Breast epithelium (tissue), 4 donors: ENCODE measurements at regions of chr5 and their contacts with region 1.

Region 1: DNA sequence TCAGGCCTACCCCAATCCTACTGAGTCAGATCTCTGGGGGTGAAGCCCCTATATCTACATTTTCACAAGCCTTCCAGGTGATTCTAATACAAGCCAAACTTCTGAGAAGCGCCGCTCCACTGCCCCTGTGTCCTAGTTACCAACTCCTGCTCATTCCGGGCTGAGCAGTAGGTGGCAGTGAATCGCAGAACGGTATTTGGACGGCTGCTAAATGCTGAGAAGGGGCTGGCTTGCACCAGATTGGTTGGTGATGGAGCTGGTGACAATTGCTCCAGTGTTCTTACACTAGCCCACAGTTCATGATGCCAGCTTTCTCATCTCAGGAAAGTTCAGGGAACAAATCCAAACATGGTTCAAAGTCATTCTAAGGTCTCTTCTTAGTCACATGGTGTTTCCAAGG is 31.1 kb upstream of the FGF1 start:
- DNase-seq: peak; percentile 55 to 80
- H3K4me3 ChIP-seq: no peak overlapping the region
- H3K27ac ChIP-seq: peak overlapping the region; percentile 63 to 87
- H3K4me1 ChIP-seq: peaks cover 0 to 8% of the 10 kb centered on the region in 2 donors
- H3K27me3 ChIP-seq: no peaks in the 10 kb centered on the region
- CTCF ChIP-seq: peak in 2 of 3 donors; percentile 23 to 47
- POLR2A ChIP-seq: no peak

Region 2: DNA sequence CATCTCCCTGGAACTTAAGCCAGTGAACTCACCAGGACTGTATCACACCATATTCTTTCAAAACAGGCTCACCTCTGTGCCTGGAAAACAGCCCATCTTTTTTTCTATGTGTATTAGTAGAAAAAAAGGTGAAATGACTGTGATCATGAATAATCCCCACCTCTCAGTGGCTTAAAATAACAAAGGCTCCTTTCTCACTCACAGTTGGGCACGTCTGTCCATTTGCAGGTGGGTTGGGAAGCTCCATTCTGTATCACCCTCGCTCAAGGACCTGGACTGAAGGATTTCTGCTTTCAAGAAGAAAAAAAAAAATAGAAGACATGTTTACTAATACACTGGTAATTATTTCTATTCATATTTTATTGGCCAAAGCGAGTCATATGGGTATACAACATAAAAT is 13.8 kb before region 1 on chr5:
- intact Hi-C with region 1: loop called (anchors 1 kb)
- DNase-seq: no peak
- H3K4me3 ChIP-seq: no peak overlapping the region
- H3K27ac ChIP-seq: no peak overlapping the region
- H3K4me1 ChIP-seq: peaks cover 0 to 7% of the 10 kb centered on the region in 2 donors
- H3K27me3 ChIP-seq: no peaks in the 10 kb centered on the region
- CTCF ChIP-seq: no peak
- POLR2A ChIP-seq: no peak

Region 3: DNA sequence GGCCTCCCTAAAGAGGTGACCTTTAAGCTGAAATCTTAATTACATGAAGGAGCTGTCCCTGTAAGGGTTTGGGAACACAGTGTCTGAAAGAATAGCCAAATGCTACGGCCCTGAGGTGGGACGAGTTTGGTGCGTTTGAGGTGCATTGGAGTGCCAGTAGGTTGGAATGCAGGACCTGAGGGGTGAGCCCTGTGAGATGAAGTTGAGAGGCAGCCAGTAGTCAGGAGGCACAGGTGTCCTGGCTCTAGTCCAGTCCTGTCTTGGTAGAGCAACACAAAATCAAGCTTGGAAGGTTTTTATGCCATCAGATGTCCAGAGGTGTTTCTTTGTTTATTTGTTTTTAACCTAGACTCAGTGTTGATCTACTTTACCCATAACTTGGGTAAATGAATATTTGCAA is 161.7 kb after region 1 on chr5:
- intact Hi-C with region 1: loop called (anchors 5 kb)
- DNase-seq: peak in 1 of 2 donors; percentile 50
- H3K4me3 ChIP-seq: no peak overlapping the region
- H3K27ac ChIP-seq: no peak overlapping the region
- H3K4me1 ChIP-seq: peaks cover 0 to 7% of the 10 kb centered on the region in 2 donors
- H3K27me3 ChIP-seq: no peaks in the 10 kb centered on the region
- CTCF ChIP-seq: no peak
- POLR2A ChIP-seq: no peak